Activated CD4-positive, alpha-beta T cell treated with anti-CD3 and anti-CD28 coated beads for 36 hours (primary cell): ENCODE measurements at regions of chr7 and their contacts with region 1.

Region 1: DNA sequence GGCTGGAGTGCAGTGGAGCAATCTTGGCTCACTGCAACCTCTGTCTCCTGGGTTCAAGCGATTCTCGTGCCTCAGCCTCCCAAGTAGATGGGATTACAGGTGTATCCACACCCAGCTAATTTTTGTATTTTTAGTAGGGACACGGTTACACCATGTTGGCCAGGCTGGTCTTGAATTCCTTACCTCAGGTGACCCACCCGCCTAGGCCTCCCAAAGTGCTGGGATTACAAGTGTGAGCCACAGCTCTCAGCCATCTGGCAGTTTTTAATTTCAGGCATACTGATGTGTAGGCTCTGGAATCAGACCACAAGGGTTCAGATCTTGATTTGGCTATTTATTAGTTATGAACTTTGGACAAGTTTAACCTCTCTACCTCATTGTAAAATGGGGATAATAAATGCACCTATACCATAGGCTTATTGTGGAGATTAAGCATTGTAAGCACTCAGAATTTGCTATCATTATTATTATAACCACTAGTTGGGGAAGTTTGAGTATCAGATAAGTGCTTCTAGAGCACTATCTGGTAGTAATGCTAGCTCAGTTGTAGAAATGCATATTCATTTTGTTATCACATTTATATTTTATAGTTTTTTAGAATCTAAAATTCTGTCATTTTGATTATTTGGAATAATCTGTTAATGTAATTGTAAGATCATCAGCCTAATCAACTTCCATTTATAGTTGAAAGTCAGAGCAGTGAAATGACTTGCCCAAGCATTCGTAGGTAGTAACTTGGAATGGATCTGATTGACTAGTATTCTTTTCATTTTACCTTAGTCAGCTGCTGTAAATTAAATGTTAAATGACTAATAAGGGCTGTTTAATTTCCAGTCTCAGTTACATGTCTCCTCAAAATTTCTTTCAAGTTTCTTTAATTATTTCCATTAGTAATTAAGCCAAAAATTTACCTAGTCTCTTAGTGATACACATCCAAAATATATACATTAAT is 22.5 kb downstream of the KMT2E start:
- DNase-seq: no peak
- ATAC-seq: peak; percentile 17
- H3K4me3 Mint-ChIP-seq: no peak overlapping the region
- H3K27ac Mint-ChIP-seq: peak overlapping the region; percentile 42
- H3K4me1 Mint-ChIP-seq: peaks cover 63% of the 10 kb centered on the region
- H3K27me3 Mint-ChIP-seq: no peaks in the 10 kb centered on the region

Region 2: GRCh38 chr7:104878577-104878976 is 157.9 kb before region 1 on chr7:
- CTCF ChIA-PET with region 1: no interaction called
- POLR2A ChIA-PET with region 1: no interaction called
- intact Hi-C with region 1: no loop called
- DNase-seq: peak; percentile 15
- ATAC-seq: peak; percentile 88
- H3K4me3 Mint-ChIP-seq: no peak overlapping the region
- H3K27ac Mint-ChIP-seq: no peak overlapping the region
- H3K4me1 Mint-ChIP-seq: peaks cover 10% of the 10 kb centered on the region
- H3K27me3 Mint-ChIP-seq: peaks cover 3% of the 10 kb centered on the region

Region 3: GRCh38 chr7:105024743-105025142 is 11.8 kb before region 1 on chr7:
- CTCF ChIA-PET with region 1: interaction called, 10 read pairs
- POLR2A ChIA-PET with region 1: interaction called, 3 read pairs
- intact Hi-C with region 1: loop called in 1 of 2 experiments (anchors 2 kb)
- DNase-seq: no peak
- ATAC-seq: peak; percentile 17
- H3K4me3 Mint-ChIP-seq: no peak overlapping the region
- H3K27ac Mint-ChIP-seq: peak overlapping the region; percentile 60
- H3K4me1 Mint-ChIP-seq: peaks cover 91% of the 10 kb centered on the region
- H3K27me3 Mint-ChIP-seq: no peaks in the 10 kb centered on the region

Region 4: DNA sequence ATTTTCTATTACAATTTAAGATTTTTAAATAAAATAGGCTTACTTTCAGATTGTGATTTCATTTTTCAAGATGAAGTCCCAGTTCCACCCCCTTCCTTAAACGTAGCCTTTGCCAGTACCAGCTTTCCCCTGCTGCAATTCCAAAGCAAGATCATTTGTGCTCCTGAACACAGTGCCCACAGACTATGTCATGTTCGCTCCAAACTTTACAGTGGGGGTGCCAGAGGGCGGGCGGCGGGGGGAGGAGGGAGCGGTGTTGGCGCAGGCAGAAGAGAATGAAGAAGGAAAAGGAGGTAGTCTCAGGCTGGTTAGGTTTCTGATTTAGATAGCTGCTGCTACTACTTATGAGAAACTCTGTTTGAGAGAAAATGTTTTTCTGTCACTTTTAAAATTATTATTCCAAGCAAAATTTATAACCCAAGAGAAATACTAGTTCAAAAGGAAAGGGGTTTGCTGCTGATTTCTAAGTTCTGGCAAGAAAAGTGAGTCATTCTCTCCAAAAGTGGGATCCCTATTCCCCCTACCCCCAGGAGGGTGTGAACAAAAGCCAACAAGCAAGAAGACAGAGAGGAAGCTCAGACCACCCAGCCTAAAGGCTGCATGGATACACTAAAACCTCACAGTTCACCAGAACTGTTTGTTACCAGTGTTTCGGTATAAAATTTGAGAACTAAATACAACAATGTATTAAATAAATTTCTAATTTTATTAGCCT is 242.6 kb after region 1 on chr7:
- CTCF ChIA-PET with region 1: no interaction called
- POLR2A ChIA-PET with region 1: no interaction called
- intact Hi-C with region 1: no loop called
- DNase-seq: no peak
- ATAC-seq: no peak
- H3K4me3 Mint-ChIP-seq: no peak overlapping the region
- H3K27ac Mint-ChIP-seq: no peak overlapping the region
- H3K4me1 Mint-ChIP-seq: peaks cover 36% of the 10 kb centered on the region
- H3K27me3 Mint-ChIP-seq: no peaks in the 10 kb centered on the region